Activated CD4-positive, alpha-beta memory T cell treated with anti-CD3 and anti-CD28 coated beads, Interleukin-2, amount 10 ng/mL, durations not matched to agents 7 days and 5 days (primary cell): ENCODE measurements at regions of chr13 and their contacts with region 1.

Region 1: GRCh38 chr13:99258210-99258860 is at the start of gene GPR18:
- DNase-seq: peak; percentile 48
- H3K4me3 Mint-ChIP-seq: peak within 1 kb of the TSS; percentile 78
- H3K27ac Mint-ChIP-seq: peak within 1 kb of the TSS; percentile 91
- H3K4me1 Mint-ChIP-seq: peaks cover 54% of the 10 kb centered on the region
- H3K27me3 Mint-ChIP-seq: no peaks in the 10 kb centered on the region
- total RNA-seq, gene GPR18: 10.3 to 10.4 TPM

Region 2: GRCh38 chr13:99176309-99177276 is 81.7 kb before region 1 on chr13:
- CTCF ChIA-PET with region 1: interaction called, 398 read pairs
- POLR2A ChIA-PET with region 1: interaction called, 9 read pairs
- DNase-seq: peak; percentile 79
- H3K4me3 Mint-ChIP-seq: no peak overlapping the region
- H3K27ac Mint-ChIP-seq: no peak overlapping the region
- H3K4me1 Mint-ChIP-seq: peaks cover 29% of the 10 kb centered on the region
- H3K27me3 Mint-ChIP-seq: peaks cover 10% of the 10 kb centered on the region

Region 3: DNA sequence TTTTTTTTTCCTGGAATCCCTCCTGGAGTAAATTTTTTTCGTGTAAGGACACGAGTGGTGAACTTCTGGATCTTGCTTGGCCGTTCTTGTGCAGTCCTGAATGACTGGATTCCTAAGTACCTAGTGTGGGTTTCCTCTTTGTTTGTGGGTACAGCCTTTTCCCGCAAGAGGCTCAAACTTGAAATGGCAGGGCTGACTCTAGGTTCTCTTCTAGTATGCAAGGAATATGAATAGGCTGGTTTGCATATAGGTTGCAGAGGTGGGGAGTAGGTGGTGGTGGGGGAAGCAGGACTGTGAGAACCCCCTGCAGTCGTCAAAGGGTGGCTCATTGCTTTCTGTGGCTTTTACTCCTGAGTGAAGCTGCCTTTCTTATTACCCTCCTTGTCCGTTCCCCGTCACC is 44.1 kb before region 1 on chr13:
- CTCF ChIA-PET with region 1: interaction called, 4 read pairs
- POLR2A ChIA-PET with region 1: interaction called, 21 read pairs
- DNase-seq: no peak
- H3K4me3 Mint-ChIP-seq: peak overlapping the region; percentile 3
- H3K27ac Mint-ChIP-seq: peak overlapping the region; percentile 83
- H3K4me1 Mint-ChIP-seq: peaks cover 54% of the 10 kb centered on the region
- H3K27me3 Mint-ChIP-seq: no peaks in the 10 kb centered on the region

Region 4: DNA sequence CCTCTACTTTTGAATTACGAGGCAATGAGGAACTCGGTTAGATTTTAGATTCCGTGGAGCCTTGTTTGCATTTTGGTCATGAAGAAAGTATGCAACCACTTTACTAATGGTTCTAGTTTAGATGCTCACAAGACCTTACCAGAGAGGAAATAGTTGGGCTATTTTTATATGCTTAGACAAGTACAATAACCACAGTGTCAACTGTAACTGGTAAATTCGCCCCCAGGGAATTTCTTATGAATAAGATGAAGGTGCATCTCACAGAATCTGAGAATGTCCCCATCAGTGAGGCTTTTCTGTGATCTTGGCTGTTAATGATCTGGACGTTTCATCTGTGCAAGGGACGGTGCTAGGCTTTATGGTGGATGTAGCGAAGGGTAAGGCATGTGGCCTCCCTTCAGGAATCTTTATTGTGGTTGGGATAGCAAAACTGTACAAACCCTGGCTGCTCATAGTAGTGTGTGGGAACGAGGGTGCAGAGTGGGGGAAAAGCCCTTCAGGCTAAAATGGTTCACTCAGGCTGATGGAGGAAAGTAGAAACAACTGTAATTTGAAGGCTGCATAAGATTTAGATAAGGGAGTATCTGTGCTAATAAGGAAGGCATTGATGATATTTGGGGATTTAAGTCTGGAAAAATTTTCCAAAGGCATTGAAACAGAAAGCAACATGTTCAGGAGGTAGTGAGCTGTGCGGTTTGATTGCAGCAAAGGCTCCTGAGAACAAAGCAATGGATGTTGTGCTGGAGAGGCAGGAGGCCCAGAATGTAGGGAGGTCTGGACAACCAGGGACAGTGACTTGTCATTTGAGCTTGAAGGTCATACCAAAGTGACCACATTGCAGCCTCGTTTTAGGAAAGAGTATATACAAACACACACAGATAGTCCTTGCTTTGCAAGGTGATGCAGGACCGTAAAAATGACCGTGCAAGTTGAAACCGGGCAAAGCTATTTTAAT is 29.3 kb before region 1 on chr13:
- CTCF ChIA-PET with region 1: interaction called, 4 read pairs
- POLR2A ChIA-PET with region 1: interaction called, 28 read pairs
- DNase-seq: no peak
- H3K4me3 Mint-ChIP-seq: peak overlapping the region; percentile 48
- H3K27ac Mint-ChIP-seq: peak overlapping the region; percentile 75
- H3K4me1 Mint-ChIP-seq: peaks cover 60% of the 10 kb centered on the region
- H3K27me3 Mint-ChIP-seq: no peaks in the 10 kb centered on the region

Region 5: DNA sequence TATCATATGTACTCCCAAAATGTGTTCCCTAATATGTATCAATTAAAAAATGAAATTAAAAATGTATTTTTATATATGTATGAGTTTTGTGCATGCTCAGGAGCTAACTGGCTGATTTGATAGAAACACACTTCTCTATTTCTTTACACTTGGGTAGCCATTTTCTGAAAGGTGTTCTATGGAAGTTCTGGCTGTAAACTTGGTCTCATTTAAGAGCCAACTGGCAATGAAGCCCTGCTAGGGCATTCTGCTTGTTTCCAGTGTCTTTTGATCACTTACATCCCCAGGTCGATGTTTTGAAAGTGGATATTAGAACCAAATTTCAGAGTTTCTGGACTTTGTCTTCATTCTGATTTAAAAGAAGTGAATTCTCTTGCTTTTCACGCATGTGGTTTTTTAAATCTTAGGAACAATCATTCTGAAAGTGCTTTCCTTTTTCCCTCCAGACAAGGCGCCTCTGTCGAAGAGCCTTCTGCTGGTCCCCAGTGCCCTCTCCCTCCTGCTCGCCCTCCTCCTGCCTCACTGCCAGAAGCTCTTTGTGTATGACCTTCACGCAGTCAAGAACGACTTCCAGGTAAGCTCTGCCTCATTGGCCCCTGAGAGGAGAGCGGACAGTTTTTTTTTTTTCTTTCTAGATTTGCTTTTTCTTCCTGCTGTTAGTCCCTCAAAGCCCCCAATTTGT is 20.2 kb before region 1 on chr13:
- CTCF ChIA-PET with region 1: interaction called, 7 read pairs
- POLR2A ChIA-PET with region 1: interaction called, 28 read pairs
- DNase-seq: no peak
- H3K4me3 Mint-ChIP-seq: peak overlapping the region; percentile 71
- H3K27ac Mint-ChIP-seq: peak overlapping the region; percentile 81
- H3K4me1 Mint-ChIP-seq: peaks cover 24% of the 10 kb centered on the region
- H3K27me3 Mint-ChIP-seq: no peaks in the 10 kb centered on the region